GM12878 (cell line): ENCODE measurements at regions of chr1 and their contacts with region 1.

Region 1: DNA sequence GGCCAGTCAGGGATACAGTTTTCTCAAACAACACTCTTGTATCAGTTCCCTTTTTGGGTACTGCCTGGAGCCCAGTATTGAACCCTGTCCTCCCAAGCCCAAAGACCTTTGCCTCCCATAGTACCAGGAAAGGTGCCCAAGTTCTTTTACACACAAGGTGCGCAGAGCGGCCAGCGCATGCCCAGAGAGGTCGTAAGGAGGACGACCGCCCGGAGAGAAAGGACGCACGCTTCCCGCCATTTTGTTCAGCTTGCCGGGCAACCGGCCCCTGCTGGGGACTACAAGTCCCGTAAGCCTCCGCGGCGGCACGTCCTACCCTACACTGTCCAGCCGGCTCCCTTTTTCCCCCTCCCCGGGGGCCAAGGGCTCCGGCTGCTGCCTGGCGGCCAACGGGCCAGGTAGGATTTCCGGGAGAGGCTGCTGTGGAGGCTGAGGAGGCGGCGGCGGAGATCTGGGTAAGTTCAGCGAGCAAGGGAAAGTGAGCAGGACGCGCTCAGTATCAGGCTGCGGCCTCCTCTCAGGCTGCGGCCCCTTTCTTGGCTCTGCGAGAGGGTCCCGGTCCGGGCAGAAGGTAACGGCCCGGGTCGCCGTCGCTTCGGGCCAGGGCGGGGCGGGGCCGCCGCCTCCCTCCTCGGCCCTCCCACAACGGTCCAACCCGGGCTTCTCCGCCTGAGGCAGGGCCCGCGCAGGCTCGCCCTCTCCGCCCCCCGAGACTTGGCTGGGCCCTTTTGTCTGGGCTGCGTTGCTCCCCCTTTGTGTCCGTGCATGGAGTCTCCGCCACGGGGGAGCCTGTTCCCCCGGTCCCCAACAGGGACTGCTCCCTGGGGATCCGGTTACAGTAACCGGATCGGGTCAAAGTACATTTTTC is at the start of gene PHACTR4:
- DNase-seq: peak; percentile 61
- ATAC-seq: peak; percentile 94
- H3K4me3 ChIP-seq: peak within 1 kb of the TSS; percentile 90
- H3K27ac ChIP-seq: peak within 1 kb of the TSS; percentile 85
- H3K4me1 ChIP-seq: peaks cover 13% of the 10 kb centered on the region
- H3K27me3 ChIP-seq: no peaks in the 10 kb centered on the region
- CTCF ChIP-seq: 0 out of 6 replicates have a peak, but pooled peaks of 1 of the 3 experiments have one; percentile 20
- EP300 ChIP-seq: 0 out of 4 replicates have a peak, but pooled peaks of 1 of the 2 experiments have one; percentile 17
- POLR2A ChIP-seq: peak; percentile 79
- RAD21 ChIP-seq: no peak
- polyA plus RNA-seq, gene PHACTR4: 8.9 to 9.3 TPM

Region 2: GRCh38 chr1:28354121-28354520 is 15.5 kb before region 1 on chr1:
- CTCF ChIA-PET with region 1: interaction called, 42 read pairs
- POLR2A ChIA-PET with region 1: interaction called, 4 read pairs
- RAD21 ChIA-PET with region 1: interaction called, 5 read pairs
- SMC1A ChIA-PET with region 1: interaction called, 5 read pairs
- in situ Hi-C with region 1: no loop called
- intact Hi-C with region 1: no loop called
- DNase-seq: no peak
- ATAC-seq: no peak
- H3K4me3 ChIP-seq: no peak overlapping the region
- H3K27ac ChIP-seq: no peak overlapping the region
- H3K4me1 ChIP-seq: no peaks in the 10 kb centered on the region
- H3K27me3 ChIP-seq: no peaks in the 10 kb centered on the region
- CTCF ChIP-seq: no peak
- EP300 ChIP-seq: no peak
- POLR2A ChIP-seq: no peak
- RAD21 ChIP-seq: no peak